ENCODE measurements at regions of chr20 and their contacts with region 1.

Region 1: GRCh38 chr20:1325173-1326030 is 3.5 kb downstream of the SDCBP2 start:
- DNase-seq: peak; percentile 99
- ATAC-seq: peak; percentile 89
- H3K4me3 ChIP-seq: peak overlapping the region; percentile 75 to 99 (median 93)
- H3K4me3 Mint-ChIP-seq: no peak overlapping the region
- H3K27ac ChIP-seq: peak overlapping the region; percentile 92 to 98
- H3K27ac Mint-ChIP-seq: no peak overlapping the region
- H3K4me1 ChIP-seq: peaks cover 27 to 28% of the 10 kb centered on the region in 2 donors
- H3K4me1 Mint-ChIP-seq: peaks cover 31% of the 10 kb centered on the region
- H3K27me3 ChIP-seq: no peaks in the 10 kb centered on the region
- H3K27me3 Mint-ChIP-seq: no peaks in the 10 kb centered on the region
- CTCF ChIP-seq: no peak

Region 2: DNA sequence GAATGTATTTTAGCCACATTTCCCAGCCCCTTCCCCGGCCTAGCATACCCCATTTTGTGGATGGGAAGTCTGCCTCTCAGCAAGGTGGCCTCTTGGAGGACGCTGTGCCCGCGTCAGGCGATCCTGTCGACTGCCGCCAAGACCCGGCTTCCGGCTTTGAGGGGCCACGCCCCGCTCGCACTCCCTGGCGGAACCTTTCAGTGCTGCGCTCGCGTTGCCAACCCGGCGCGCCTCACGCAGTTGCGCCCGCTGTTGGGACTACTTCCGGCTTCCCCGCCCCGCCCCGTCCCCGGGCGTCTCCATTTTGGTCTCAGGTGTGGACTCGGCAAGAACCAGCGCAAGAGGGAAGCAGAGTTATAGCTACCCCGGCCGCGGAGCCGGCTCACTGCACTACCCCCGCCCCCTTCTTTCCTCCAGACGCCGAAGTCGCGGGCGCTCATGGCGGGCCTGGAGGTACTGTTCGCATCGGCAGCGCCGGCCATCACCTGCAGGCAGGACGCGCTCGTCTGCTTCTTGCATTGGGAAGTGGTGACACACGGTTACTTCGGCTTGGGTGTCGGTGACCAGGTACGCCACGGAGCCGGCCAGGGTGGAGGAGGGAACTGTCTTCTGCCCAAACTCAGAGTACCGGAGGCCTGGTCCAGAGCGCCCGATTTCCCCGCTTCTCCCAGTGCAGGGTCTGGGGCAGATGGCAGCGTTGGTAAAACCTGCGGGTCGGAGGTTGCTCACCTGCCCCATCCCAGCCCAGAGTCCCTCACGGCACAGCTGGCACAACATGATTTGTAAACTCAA is 206.9 kb before region 1 on chr20 and contains the start of gene PSMF1:
- CTCF ChIA-PET with region 1: no interaction called
- POLR2A ChIA-PET with region 1: no interaction called
- intact Hi-C with region 1: loop called (anchors 1 kb)
- DNase-seq: peak; percentile 97
- ATAC-seq: peak; percentile 94
- H3K4me3 ChIP-seq: peak within 1 kb of the TSS; percentile 78 to 97 (median 85)
- H3K4me3 Mint-ChIP-seq: peak within 1 kb of the TSS; percentile 91
- H3K27ac ChIP-seq: peak within 1 kb of the TSS; percentile 70 to 91
- H3K27ac Mint-ChIP-seq: peak within 1 kb of the TSS; percentile 93
- H3K4me1 ChIP-seq: peaks cover 42 to 53% of the 10 kb centered on the region in 2 donors
- H3K4me1 Mint-ChIP-seq: peaks cover 62% of the 10 kb centered on the region
- H3K27me3 ChIP-seq: no peaks in the 10 kb centered on the region
- H3K27me3 Mint-ChIP-seq: no peaks in the 10 kb centered on the region
- CTCF ChIP-seq: no peak
- total RNA-seq, gene PSMF1: 113 and 114 TPM in 2 replicates

Region 3: DNA sequence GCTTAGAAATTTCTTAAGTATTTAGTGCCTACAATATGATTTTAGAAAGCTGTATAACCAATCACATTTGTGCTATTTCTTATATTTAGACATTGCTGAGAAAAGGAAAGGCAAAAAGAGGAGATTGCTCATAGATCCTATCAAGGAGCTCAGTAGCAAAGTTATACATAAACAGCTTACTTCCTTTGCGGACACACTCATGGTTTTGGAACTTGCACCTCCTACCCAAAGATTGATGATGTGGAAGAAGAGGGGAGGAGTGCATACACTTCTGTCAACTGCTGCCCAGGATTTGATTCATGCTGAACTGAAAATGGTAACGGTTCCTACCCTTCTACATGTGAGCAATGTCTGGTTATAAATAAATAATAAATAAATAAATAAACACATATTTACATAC is 82.9 kb before region 1 on chr20:
- CTCF ChIA-PET with region 1: no interaction called
- POLR2A ChIA-PET with region 1: no interaction called
- intact Hi-C with region 1: no loop called
- DNase-seq: no peak
- ATAC-seq: no peak
- H3K4me3 ChIP-seq: no peak overlapping the region
- H3K4me3 Mint-ChIP-seq: no peak overlapping the region
- H3K27ac ChIP-seq: no peak overlapping the region
- H3K27ac Mint-ChIP-seq: no peak overlapping the region
- H3K4me1 ChIP-seq: no peaks in the 10 kb centered on the region
- H3K4me1 Mint-ChIP-seq: no peaks in the 10 kb centered on the region
- H3K27me3 ChIP-seq: peaks cover 0 to 14% (median 7%) of the 10 kb centered on the region in 4 experiments
- H3K27me3 Mint-ChIP-seq: peaks cover 21% of the 10 kb centered on the region
- CTCF ChIP-seq: no peak

Region 4: DNA sequence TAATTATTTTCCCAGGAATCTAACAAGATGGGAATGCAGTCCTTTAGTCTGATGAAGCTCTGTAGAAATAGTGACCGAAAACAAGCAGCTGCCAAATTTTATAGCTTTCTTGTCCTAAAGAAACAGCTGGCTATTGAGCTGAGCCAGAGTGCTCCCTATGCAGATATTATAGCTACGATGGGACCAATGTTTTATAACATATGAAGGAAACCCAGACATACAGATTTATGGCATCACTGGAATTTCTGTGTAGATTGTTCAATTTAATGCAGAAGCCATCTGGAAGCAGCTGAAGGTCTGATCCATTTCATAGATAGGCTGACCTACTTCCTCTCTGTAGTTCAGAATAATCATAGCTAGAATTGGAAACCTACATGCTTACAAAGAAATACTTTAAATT is 71.1 kb before region 1 on chr20:
- CTCF ChIA-PET with region 1: no interaction called
- POLR2A ChIA-PET with region 1: no interaction called
- intact Hi-C with region 1: no loop called
- DNase-seq: no peak
- ATAC-seq: no peak
- H3K4me3 ChIP-seq: no peak overlapping the region
- H3K4me3 Mint-ChIP-seq: no peak overlapping the region
- H3K27ac ChIP-seq: no peak overlapping the region
- H3K27ac Mint-ChIP-seq: no peak overlapping the region
- H3K4me1 ChIP-seq: no peaks in the 10 kb centered on the region
- H3K4me1 Mint-ChIP-seq: no peaks in the 10 kb centered on the region
- H3K27me3 ChIP-seq: peaks cover 0 to 39% (median 10%) of the 10 kb centered on the region in 4 experiments
- H3K27me3 Mint-ChIP-seq: peaks cover 34% of the 10 kb centered on the region
- CTCF ChIP-seq: no peak

Region 5: DNA sequence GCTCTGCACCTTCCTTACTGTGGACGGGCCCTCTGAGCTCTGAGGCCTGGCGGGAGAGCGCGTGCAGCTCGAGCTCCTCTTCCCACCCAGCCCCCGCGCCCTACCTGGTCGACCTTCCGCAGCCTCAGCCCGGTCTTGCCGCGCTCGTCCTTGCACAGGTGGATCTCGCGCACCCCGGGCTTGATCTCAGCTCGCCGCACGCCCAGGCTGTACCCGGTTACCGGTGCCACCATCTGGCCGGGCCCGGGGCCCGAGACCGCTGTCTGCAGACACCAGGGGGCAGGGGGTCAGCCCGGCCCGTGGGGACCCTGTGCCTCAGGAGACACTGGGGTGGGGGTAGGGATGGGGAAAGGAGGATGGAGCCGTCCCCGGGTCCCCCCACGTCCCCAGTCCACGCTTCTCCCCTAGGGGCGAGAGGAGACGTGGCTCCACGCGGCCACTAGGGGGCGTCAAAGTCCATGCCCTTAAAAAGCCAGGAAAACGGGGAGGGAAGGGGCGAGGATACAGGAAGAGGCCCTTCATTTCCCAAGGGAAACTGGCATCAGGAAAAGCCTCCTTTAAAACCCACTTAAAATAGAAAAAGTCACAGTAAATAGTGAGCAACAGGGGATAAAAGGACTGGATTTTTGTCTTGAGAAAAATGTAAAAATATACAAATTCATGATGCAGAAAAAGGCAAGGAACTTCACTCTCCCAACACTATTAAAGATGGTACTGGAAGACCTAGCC is 12.0 kb before region 1 on chr20:
- CTCF ChIA-PET with region 1: interaction called, 10 read pairs
- POLR2A ChIA-PET with region 1: no interaction called
- intact Hi-C with region 1: no loop called
- DNase-seq: peak; percentile 78
- ATAC-seq: peak; percentile 65
- H3K4me3 ChIP-seq: no peak overlapping the region
- H3K4me3 Mint-ChIP-seq: no peak overlapping the region
- H3K27ac ChIP-seq: no peak overlapping the region
- H3K27ac Mint-ChIP-seq: no peak overlapping the region
- H3K4me1 ChIP-seq: peaks cover 0 to 7% of the 10 kb centered on the region in 2 donors
- H3K4me1 Mint-ChIP-seq: no peaks in the 10 kb centered on the region
- H3K27me3 ChIP-seq: no peaks in the 10 kb centered on the region
- H3K27me3 Mint-ChIP-seq: peaks cover 4% of the 10 kb centered on the region
- CTCF ChIP-seq: peak; percentile 99

Region 6: GRCh38 chr20:1353956-1354355 is 28.6 kb after region 1 on chr20:
- CTCF ChIA-PET with region 1: no interaction called
- POLR2A ChIA-PET with region 1: no interaction called
- intact Hi-C with region 1: no loop called
- DNase-seq: no peak
- ATAC-seq: no peak
- H3K4me3 ChIP-seq: no peak overlapping the region
- H3K4me3 Mint-ChIP-seq: no peak overlapping the region
- H3K27ac ChIP-seq: no peak overlapping the region
- H3K27ac Mint-ChIP-seq: no peak overlapping the region
- H3K4me1 ChIP-seq: no peaks in the 10 kb centered on the region
- H3K4me1 Mint-ChIP-seq: peaks cover 5% of the 10 kb centered on the region
- H3K27me3 ChIP-seq: no peaks in the 10 kb centered on the region
- H3K27me3 Mint-ChIP-seq: no peaks in the 10 kb centered on the region
- CTCF ChIP-seq: no peak

Region 7: DNA sequence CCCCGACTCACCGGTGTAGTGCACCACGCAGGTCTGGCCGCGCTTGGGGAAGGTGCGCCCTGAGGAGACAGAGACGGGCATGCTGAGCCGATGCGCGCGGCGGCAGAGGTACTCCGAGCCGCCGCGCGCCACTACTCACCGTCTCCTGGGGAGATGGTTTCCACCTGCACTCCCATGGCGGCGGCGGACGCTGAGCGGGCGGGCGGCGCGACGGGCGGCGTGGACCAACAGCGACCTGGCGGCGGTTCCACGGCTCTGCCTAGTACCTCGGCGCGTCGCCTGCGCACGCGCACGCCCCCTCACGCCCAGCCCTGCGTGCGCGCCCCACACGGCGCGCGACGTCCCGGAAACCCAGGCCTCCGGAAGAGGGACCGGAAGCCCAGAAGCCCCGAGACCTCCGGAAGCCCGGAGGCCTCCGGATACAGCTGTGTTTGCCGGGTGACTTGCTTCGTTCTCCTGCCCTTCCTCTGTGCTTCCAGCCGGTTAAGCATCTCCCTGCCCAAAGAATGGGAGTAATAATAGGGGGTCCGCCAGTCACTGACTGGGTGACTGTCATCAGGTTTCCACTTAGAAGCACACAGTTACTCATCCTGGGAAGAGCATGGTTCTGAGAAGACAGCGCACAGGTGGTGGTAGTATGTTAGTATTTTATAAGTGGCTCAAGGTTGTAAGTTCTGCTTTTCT is 67.6 kb after region 1 on chr20 and contains the start of gene FKBP1A:
- CTCF ChIA-PET with region 1: interaction called, 3 read pairs
- POLR2A ChIA-PET with region 1: interaction called, 6 read pairs
- intact Hi-C with region 1: loop called (anchors 1 kb)
- DNase-seq: peak; percentile 97
- ATAC-seq: peak; percentile 88
- H3K4me3 ChIP-seq: peak within 1 kb of the TSS; percentile 66 to 93 (median 76)
- H3K4me3 Mint-ChIP-seq: peak within 1 kb of the TSS; percentile 100
- H3K27ac ChIP-seq: peak within 1 kb of the TSS; percentile 82 to 84
- H3K27ac Mint-ChIP-seq: peak within 1 kb of the TSS; percentile 100
- H3K4me1 ChIP-seq: peaks cover 64 to 66% of the 10 kb centered on the region in 2 donors
- H3K4me1 Mint-ChIP-seq: peaks cover 83% of the 10 kb centered on the region
- H3K27me3 ChIP-seq: no peaks in the 10 kb centered on the region
- H3K27me3 Mint-ChIP-seq: no peaks in the 10 kb centered on the region
- CTCF ChIP-seq: no peak
- total RNA-seq, gene FKBP1A: 86.5 and 86.7 TPM in 2 replicates

Region 8: DNA sequence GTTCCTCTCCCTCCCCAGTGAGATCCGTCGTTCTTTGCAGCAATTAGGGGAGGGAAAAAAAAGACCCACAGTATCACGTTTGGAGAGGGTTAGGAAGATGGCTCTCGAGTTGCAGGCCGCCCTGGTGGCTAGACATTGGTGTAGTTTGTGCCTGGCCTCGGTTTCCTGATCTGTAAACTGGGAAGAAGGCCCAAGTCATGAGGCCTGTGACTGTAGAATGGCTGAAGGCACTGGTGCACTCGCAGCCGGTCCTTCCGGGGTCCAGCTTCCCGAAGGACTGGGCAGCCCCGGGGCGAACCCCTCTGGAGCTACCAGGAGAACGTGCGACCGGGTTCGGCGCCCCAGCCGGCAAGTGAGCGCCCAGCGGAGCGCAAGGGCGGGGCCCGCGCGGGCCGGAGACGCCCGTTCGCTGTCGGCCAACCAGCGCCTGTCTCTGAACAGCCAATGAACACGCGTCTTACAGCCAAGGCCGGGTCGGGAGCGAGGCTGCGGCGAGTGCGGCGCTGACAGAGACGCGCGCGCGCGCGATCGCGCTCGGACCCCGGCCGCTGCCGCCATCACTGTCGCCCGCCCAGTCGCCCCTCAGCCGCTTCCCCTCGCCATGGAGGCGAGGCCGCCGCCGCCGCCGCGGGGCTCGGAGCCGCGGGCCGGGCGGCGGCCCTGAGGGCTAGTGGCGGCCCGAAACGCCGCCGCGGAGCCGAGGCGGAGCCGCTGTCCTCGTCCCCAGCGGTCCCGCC is 1547.8 kb after region 1 on chr20 and contains the start of gene PTPRA:
- CTCF ChIA-PET with region 1: no interaction called
- POLR2A ChIA-PET with region 1: no interaction called
- intact Hi-C with region 1: loop called (anchors 5 kb)
- DNase-seq: peak; percentile 92
- ATAC-seq: peak; percentile 94
- H3K4me3 ChIP-seq: peak within 1 kb of the TSS; percentile 77 to 85 (median 79)
- H3K4me3 Mint-ChIP-seq: peak within 1 kb of the TSS; percentile 92
- H3K27ac ChIP-seq: peak within 1 kb of the TSS; percentile 25 to 32
- H3K27ac Mint-ChIP-seq: peak within 1 kb of the TSS; percentile 84
- H3K4me1 ChIP-seq: peaks cover 27 to 31% of the 10 kb centered on the region in 2 donors
- H3K4me1 Mint-ChIP-seq: peaks cover 33% of the 10 kb centered on the region
- H3K27me3 ChIP-seq: peaks cover 0 to 11% (median 0%) of the 10 kb centered on the region in 4 experiments
- H3K27me3 Mint-ChIP-seq: peaks cover 8% of the 10 kb centered on the region
- CTCF ChIP-seq: no peak
- total RNA-seq, gene PTPRA: 64.2 and 70.0 TPM in 2 replicates

Measured in B cell (primary cell).